RWPE1 (cell line): ENCODE measurements at regions of chr9 and their contacts with region 1.

Region 1: GRCh38 chr9:87725900-87726709 is at the start of gene CTSL:
- DNase-seq: peak; percentile 87
- H3K27ac ChIP-seq: peak within 1 kb of the TSS; percentile 84
- CTCF ChIP-seq: no peak; the same call in 1 of the 2 replicates

Region 2: GRCh38 chr9:87693986-87694755 is 31.9 kb before region 1 on chr9:
- CTCF ChIA-PET with region 1: no interaction called
- POLR2A ChIA-PET with region 1: no interaction called
- DNase-seq: no peak
- H3K27ac ChIP-seq: no peak overlapping the region
- CTCF ChIP-seq: no peak

Region 3: DNA sequence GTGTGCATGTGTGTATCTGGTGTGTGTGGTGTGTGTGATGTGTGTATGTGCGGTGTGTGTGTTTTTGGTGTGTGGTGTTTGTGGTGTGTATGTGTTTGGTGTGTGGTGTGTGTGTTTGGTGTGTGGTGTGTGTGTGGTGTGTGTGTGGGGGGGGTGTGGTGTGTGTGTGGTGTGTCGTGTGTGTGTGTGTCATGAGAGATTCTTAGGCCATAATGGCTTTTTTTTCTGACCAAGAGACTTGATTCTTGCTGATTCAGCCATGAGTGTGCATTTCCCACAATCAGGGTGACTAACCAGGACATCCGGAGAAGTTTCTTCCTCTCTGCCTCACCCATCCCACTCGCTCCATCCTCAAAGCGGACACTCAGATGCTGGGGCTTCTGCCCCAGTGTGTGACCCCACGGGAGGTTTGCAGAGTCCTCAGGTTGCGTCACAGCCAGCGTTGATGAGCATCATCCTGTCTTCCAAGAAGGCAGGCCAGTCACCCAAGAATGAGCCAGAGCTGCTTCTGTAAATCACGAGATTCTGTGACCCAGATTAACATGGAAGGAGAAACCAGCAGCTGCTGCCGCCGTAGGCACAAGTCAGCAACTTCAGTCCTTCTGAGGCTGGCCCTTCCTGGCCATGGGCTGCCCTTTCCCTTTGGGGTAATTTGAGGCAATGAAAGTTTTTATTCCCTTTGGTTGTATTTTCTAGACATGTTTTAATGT is 12.7 kb before region 1 on chr9:
- CTCF ChIA-PET with region 1: interaction called, 3 read pairs
- POLR2A ChIA-PET with region 1: interaction called, 10 read pairs
- DNase-seq: peak; percentile 84
- H3K27ac ChIP-seq: peak overlapping the region; percentile 79
- CTCF ChIP-seq: no peak

Region 4: GRCh38 chr9:87850391-87850790 is 124.3 kb after region 1 on chr9:
- CTCF ChIA-PET with region 1: no interaction called
- POLR2A ChIA-PET with region 1: no interaction called
- DNase-seq: peak; percentile 29
- H3K27ac ChIP-seq: no peak overlapping the region
- CTCF ChIP-seq: no peak